Activated T-helper 1 cell treated with anti-CD3 and anti-CD28 coated beads, Interleukin-12 subunit alpha, Interleukin-12 subunit beta, Interleukin-2, Interleukin-4 antibody, amounts not matched to agents 30 ng/mL and 10 ng/mL and 1 ng/mL, durations not matched to agents 14 hours and 24 hours and 36 hours (primary cell): ENCODE measurements at regions of chr11 and their contacts with region 1.

Region 1: DNA sequence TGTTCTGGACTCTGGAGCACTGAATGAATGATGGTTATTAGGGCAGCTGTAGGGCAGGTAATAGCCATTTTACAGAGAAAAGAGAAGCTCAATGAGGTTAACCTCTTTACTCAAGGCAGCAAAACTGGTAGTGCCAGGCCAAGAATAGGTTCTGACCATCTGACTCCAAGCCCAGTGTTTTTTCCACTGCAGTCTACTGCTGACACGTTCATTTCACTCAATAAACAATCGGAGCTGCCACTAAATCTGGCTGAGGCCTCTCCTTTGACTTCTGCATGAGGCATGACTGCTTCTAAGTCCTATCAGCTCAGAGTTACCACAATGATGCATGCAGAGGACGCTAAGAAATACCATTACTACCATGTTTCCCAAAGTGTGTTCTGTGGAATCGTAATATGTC is 117.6 kb downstream of the ARL14EP start:
- DNase-seq: no peak
- H3K4me3 Mint-ChIP-seq: no peak overlapping the region
- H3K27ac Mint-ChIP-seq: no peak overlapping the region
- H3K4me1 Mint-ChIP-seq: no peaks in the 10 kb centered on the region
- H3K27me3 Mint-ChIP-seq: peaks cover 4% of the 10 kb centered on the region

Region 2: GRCh38 chr11:30244265-30244664 is 196.2 kb before region 1 on chr11:
- intact Hi-C with region 1: no loop called
- DNase-seq: no peak
- H3K4me3 Mint-ChIP-seq: no peak overlapping the region
- H3K27ac Mint-ChIP-seq: no peak overlapping the region
- H3K4me1 Mint-ChIP-seq: no peaks in the 10 kb centered on the region
- H3K27me3 Mint-ChIP-seq: no peaks in the 10 kb centered on the region

Region 3: DNA sequence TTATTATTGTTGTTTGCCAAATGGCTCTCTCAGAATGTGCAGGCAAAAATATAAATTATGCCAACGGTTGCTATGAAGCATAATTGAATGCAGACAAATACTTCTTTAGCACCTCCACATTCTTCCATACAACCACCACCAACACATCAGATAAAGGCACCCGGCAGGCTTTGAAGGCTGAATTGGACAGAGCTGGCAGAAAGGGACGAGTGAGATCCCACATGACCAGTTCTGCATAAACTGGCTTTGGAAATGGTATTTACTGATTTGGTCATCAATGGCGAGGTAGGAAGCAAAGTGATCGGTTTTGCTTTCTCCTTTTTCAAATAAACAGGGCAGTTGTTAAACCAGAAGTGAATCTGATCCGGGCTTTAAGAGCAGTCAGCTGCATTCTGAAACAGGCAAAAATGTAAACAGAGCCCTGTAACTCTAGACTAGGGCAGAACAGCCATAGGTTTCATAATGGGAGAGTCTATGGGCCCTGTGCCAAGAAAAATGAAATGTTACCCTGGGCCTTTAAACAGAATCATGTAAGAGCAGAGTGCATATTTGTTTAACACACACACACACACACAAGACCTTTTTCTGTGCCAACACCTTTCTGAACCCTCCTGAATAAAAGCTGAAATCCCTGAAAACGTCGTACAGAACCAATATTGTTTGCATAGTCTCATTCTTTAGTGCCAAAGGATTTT is 47.9 kb after region 1 on chr11:
- intact Hi-C with region 1: loop called (anchors 5 kb)
- DNase-seq: no peak
- H3K4me3 Mint-ChIP-seq: no peak overlapping the region
- H3K27ac Mint-ChIP-seq: no peak overlapping the region
- H3K4me1 Mint-ChIP-seq: no peaks in the 10 kb centered on the region
- H3K27me3 Mint-ChIP-seq: no peaks in the 10 kb centered on the region